ENCODE measurements at regions of chr11 and their contacts with region 1.

Region 1: DNA sequence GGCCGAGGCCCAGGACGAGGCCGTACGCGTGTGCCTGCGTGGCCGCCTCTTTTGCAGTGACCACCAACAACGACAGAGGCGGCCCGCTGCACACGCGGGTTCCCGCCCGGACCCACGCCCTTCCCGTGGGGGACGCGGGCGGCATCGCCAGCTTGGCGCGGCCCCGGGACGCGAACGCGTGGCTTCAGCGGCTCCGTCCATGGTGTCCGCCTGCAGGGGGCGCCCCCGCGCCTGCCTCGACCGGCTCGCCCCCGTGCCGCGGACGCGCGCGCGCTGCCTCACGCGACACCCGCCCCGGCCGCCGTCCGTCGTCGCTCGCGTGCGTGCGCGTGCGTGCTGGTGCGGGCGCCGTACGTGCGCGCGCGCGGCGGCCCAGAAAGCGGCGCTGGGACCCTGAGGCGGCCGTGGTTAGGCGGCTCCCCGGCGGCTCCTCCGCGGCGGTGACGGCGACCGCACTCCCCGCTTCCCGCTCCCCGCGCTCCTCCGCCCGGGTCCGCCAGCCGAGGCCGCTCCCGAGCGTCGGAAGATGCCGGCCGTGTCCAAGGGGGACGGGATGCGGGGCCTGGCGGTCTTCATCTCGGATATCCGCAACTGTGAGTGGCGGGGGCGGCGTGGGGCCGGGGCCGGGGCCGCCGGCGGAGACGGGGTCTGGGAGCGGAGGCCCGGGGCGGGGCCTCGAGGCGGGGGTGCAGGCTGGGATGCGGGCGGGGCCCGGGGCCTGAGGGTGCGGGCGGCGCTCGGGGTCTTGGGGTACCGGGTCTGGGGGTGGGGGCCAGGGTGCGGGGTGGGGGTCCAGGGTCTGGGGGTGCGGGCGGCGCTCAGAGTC is at the start of gene AP2A2:
- DNase-seq: peak; percentile 83 to 99 (median 92)
- ATAC-seq: peak; percentile 74 to 77
- H3K4me3 Mint-ChIP-seq: peak within 1 kb of the TSS; percentile 79 to 94 (median 86)
- H3K27ac Mint-ChIP-seq: peak within 1 kb of the TSS; percentile 81 to 96 (median 92)
- H3K4me1 Mint-ChIP-seq: peaks cover 8 to 44% (median 35%) of the 10 kb centered on the region in 4 donors
- H3K27me3 Mint-ChIP-seq: no peaks in the 10 kb centered on the region
- polyA plus RNA-seq, gene AP2A2: 8.2 to 13.9 (median 11.6) TPM

Region 2: GRCh38 chr11:910589-911195 is 15.0 kb before region 1 on chr11 and contains the start of gene CHID1:
- POLR2A ChIA-PET with region 1: interaction called, 13 read pairs
- DNase-seq: peak; percentile 51 to 84 (median 74)
- ATAC-seq: peak; percentile 94
- H3K4me3 Mint-ChIP-seq: peak within 1 kb of the TSS; percentile 86 to 97 (median 92)
- H3K27ac Mint-ChIP-seq: peak within 1 kb of the TSS; percentile 75 to 90 (median 87)
- H3K4me1 Mint-ChIP-seq: peaks cover 14 to 29% (median 20%) of the 10 kb centered on the region in 4 donors
- H3K27me3 Mint-ChIP-seq: no peaks in the 10 kb centered on the region
- polyA plus RNA-seq, gene CHID1: 50.2 to 61.5 (median 54.7) TPM